ENCODE measurements at regions of chr1 and their contacts with region 1.

Region 1: GRCh38 chr1:18126616-18127015 is 19.0 kb downstream of the IGSF21 start:
- DNase-seq: no peak
- H3K4me3 ChIP-seq: no peak overlapping the region
- H3K27ac ChIP-seq: no peak overlapping the region
- H3K4me1 ChIP-seq: peaks cover 0 to 6% of the 10 kb centered on the region in 2 experiments; a peak in 1 of 4 replicates
- H3K27me3 ChIP-seq: no peaks in the 10 kb centered on the region
- CTCF ChIP-seq: no peak
- EP300 ChIP-seq: no peak
- RAD21 ChIP-seq: no peak

Region 2: DNA sequence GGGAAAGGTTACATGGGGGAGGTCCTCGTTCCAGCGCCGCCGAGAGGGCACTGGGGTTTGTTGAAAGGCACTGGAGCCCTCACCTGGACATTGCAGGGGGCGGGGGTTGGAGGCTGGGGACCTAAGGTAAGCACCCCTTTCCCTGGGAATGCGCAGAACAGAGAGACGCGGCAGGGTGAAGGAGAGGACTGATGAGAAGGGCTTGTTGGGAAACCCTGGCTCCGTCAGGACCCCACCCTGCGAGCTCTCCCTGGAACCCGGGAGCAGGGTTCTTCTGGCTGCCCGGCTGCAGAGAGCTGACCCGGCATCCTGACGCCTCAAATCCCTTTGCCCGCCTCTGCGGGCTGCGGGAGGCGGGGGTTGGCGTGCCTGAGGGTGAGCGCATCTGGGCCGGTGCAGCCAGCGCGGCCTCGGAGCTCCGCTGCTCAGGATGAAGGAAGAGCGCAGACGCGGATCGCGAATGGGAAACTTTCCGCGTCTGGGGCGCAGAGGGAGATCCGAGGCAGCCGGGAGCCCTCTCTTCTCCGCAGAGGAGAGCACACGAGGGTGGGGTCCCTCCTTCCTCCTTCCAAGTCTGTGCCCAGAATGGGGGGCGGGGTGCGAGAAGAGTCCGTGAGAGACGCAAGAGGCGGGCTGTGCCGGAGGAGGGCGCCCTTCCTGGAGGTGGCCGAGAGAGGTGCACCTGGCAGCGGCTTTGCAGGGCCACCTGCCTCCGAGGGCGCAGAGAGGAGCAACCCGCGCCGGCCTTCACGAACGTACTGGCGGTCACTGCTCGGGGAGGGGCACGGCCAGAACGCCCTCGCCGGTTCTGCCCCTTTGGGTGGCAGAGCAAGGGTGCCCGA is 16.6 kb before region 1 on chr1:
- CTCF ChIA-PET with region 1: interaction called, 10 read pairs
- POLR2A ChIA-PET with region 1: no interaction called
- DNase-seq: peak; percentile 80
- H3K4me3 ChIP-seq: peak overlapping the region; percentile 24 to 41; a peak in 2 of 4 replicates
- H3K27ac ChIP-seq: no peak overlapping the region
- H3K4me1 ChIP-seq: peaks cover 0 to 25% of the 10 kb centered on the region in 2 experiments; a peak in 1 of 4 replicates
- H3K27me3 ChIP-seq: peaks cover 20% of the 10 kb centered on the region; the same call in 1 of the 2 replicates
- CTCF ChIP-seq: no peak
- EP300 ChIP-seq: no peak
- RAD21 ChIP-seq: peak; percentile 14; the same call in 1 of the 2 replicates